ENCODE measurements at regions of chr6 and their contacts with region 1.

Region 1: GRCh38 chr6:36851149-36851614 is 11.9 kb upstream of the CPNE5 start:
- DNase-seq: peak in 2 of 4 donors; percentile 43 to 74
- ATAC-seq: peak; percentile 46
- H3K4me3 ChIP-seq: no peak overlapping the region
- H3K27ac ChIP-seq: peak overlapping the region in 1 of 2 donors; percentile 82
- H3K4me1 ChIP-seq: peaks cover 14 to 45% of the 10 kb centered on the region in 2 donors
- H3K27me3 ChIP-seq: no peaks in the 10 kb centered on the region
- CTCF ChIP-seq: peak; percentile 70 to 82

Region 2: DNA sequence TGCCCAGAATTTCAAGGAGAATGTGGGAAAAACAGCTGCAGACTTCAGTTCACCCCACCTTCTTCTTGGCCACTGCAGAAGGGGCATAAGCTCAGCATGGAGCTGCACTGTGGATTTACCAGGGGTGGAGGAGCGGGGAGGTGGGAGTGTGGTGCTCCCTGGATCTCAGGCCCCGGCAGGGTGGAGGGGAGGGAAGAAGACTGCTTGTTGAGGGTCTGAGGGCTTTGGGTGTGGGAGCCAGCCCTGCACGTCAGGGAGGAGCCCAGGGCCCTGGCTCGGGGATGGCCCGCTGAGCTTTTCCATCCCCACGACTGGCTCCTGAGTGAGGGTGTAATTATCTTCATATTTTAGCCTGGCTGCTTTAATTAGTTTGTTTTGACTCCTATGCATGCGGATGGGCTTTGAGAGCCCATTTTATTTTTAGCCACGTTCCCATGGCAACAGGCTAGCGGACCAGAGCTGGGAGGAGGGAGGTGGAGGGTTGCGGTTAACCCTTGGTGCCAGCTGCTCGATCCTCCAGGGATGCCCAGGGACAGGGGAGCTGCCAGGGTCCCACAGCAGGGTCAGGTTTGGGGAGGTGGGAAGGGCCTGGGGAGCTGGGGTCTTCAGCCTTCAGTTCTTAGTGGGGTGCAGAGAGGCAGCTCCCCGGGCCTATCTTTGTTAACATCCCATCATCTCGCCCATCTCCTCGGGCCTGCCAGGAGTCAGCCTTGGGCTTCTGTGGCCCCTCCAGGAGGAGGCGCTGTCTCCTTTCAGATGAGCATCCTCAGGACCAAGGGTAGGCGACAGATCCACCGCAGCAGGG is 85.4 kb before region 1 on chr6:
- intact Hi-C with region 1: loop called in 1 of 2 experiments (anchors 2 kb)
- DNase-seq: peak; percentile 51 to 91 (median 85)
- ATAC-seq: peak; percentile 95
- H3K4me3 ChIP-seq: no peak overlapping the region
- H3K27ac ChIP-seq: no peak overlapping the region
- H3K4me1 ChIP-seq: peaks cover 0 to 44% of the 10 kb centered on the region in 2 donors
- H3K27me3 ChIP-seq: no peaks in the 10 kb centered on the region
- CTCF ChIP-seq: peak; percentile 88 to 92

Region 3: DNA sequence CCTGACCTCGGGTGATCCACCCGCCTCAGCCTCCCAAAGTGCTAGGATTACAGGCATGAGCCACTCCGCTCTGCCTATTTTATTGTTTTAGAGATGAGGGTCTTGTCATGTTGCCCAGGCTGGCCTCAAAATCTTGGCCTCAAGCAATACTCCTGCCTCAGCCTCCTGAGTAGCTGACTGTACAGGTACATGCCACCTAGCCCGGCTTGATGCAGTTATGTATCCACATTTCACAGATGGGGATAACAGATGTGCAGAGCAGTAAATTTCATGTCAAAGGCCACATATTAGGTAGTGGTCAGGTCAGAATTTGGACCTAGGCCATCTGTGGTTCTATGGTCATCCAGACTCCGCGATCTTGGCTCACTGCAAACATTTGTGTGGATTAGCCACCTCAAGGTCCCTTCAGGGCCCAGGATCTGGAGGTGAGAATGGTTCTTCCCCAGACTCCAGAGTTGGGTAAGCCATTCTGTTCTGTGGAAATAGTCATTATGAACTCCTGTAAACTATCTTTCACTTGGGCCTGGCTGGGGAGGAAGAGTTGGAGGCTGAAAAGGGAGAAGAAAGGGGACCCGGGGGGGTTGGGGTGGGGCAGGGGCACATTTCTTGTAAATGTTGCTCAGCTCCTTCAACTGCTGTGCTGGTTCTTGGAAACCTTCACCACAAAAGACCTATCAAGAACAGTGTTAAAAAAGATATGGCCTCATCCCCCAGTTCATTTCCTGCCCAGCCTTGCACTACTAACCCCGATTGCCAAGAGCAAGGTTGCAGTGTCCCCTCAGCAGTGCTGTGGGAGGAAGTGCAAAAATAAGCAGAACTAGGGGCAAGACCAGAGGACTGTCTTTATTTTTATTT is 331.8 kb after region 1 on chr6:
- intact Hi-C with region 1: no loop called
- DNase-seq: peak in 1 of 4 donors; percentile 72
- ATAC-seq: peak; percentile 85
- H3K4me3 ChIP-seq: no peak overlapping the region
- H3K27ac ChIP-seq: peak overlapping the region; percentile 51 to 93
- H3K4me1 ChIP-seq: peaks cover 5 to 88% of the 10 kb centered on the region in 2 donors
- H3K27me3 ChIP-seq: no peaks in the 10 kb centered on the region
- CTCF ChIP-seq: no peak